ENCODE measurements at regions of chr7 and their contacts with region 1.

Region 1: GRCh38 chr7:117848941-117849340 is 24.3 kb downstream of the CTTNBP2 start:
- DNase-seq: no peak
- H3K4me3 ChIP-seq: no peak overlapping the region
- H3K27ac ChIP-seq: no peak overlapping the region
- H3K4me1 ChIP-seq: no peaks in the 10 kb centered on the region
- H3K27me3 ChIP-seq: no peaks in the 10 kb centered on the region
- CTCF ChIP-seq: no peak
- EP300 ChIP-seq: no peak
- POLR2A ChIP-seq: no peak

Region 2: DNA sequence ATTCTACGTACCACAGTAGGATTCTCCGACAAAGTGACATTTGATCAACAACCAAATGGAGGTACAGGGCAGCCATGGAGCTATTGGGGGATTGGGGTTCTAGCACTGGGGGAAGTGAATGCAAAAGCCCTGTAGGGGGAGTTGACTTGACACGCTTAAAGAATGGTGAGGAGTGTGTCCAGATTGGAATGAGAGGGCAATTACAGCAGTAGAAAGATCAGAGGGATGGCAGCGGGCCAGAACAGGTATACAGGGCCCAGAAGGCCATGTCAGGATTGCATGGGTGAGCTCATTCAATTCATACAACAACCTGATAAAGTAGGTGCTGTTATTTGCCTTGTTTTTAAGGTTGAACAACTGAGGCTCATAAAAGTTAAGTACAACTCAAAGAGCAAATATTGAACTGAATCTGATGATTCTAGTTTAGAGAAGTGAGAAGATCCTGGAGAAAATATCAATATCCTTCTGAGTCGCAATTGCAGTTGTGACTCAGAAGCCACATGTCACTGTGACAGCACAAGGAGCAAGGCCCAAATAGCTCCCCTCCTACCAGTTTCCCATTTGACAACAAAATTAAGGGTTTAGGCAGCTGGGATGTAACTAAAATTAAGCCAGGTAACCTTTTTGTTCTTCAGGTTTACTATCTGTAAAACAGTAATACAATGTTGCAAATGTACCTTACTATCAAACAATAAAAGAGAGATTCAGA is 52.3 kb after region 1 on chr7:
- intact Hi-C with region 1: loop called (anchors 10 kb)
- DNase-seq: peak in 1 of 2 donors; percentile 54
- H3K4me3 ChIP-seq: no peak overlapping the region
- H3K27ac ChIP-seq: no peak overlapping the region
- H3K4me1 ChIP-seq: no peaks in the 10 kb centered on the region
- H3K27me3 ChIP-seq: peaks cover 0 to 11% (median 0%) of the 10 kb centered on the region in 3 donors
- CTCF ChIP-seq: no peak
- EP300 ChIP-seq: no peak
- POLR2A ChIP-seq: no peak

Measured in stomach (tissue), 19 donors.